Head of caudate nucleus (tissue), 42 donors: ENCODE measurements at regions of chr1 and their contacts with region 1.

Region 1: DNA sequence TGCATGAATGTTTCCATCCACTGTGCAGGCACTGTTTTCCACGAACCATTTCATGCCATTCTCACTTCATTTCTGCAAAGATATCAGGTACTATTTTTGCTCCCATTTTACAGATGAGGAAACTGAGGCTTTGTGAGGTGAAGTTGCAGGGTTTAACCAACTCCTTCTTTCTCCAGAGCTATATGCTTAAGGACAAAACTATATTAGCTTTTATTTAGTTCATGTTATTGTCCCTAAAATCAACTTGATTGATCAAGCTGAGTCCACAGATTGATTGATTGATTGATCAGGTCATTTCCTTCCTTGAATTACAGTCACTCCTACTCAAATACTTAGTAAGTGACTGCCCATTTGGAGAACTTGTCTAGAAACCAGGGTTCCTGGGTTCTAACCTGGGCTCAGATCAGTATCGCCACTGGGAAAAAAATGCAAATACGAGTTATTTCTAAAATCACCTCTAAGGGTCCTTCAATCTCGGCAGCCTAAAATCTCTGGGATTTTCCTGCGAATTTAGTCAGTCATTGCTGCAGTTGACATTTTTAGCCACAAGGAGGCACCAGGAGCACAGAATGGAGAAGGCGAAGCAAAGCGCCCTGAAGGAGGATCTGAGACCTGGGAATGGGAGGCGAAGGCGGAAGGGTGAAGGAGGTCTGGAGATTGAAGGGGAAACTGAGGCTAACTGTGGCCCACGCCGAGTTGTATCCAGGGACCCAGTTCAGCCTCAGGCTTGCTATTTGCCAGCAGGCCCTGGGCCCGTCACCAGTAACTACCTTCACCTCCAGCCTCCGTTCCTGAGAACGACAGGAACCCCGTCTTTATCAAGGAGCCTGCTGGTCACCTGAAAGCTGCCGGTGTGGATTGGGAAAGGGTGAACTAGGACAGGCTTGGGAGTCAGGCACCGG is 14.3 kb upstream of the MUL1 start:
- DNase-seq: peak; percentile 30 to 91 (median 78)

Region 2: DNA sequence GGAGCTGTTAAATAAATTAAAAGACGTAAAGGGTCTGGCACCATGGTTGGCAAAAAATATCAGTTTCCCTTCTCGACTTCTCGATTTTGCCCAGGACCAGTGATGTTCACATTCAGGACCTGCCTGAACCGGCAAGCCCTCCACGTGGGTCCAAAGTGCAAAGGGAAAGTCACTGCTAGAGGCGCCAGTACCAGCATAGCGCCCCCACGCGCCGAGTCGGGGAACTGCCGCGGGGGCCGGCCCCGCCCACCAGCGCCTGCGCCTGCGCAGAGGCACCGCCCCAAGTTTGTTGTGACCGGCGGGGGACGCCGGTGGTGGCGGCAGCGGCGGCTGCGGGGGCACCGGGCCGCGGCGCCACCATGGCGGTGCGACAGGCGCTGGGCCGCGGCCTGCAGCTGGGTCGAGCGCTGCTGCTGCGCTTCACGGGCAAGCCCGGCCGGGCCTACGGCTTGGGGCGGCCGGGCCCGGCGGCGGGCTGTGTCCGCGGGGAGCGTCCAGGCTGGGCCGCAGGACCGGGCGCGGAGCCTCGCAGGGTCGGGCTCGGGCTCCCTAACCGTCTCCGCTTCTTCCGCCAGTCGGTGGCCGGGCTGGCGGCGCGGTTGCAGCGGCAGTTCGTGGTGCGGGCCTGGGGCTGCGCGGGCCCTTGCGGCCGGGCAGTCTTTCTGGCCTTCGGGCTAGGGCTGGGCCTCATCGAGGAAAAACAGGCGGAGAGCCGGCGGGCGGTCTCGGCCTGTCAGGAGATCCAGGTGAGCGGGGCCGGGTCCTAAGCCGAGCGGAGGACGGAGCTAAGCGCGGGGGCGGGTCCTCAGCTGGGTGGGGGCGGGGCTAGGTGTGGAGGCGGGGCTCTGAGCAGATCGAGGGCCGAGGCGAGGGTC is 111.2 kb after region 1 on chr1 and contains the start of gene PINK1:
- intact Hi-C with region 1: loop called (anchors 5 kb)
- DNase-seq: peak; percentile 53 to 92 (median 82)